ENCODE measurements at regions of chr1 and their contacts with region 1.

Region 1: DNA sequence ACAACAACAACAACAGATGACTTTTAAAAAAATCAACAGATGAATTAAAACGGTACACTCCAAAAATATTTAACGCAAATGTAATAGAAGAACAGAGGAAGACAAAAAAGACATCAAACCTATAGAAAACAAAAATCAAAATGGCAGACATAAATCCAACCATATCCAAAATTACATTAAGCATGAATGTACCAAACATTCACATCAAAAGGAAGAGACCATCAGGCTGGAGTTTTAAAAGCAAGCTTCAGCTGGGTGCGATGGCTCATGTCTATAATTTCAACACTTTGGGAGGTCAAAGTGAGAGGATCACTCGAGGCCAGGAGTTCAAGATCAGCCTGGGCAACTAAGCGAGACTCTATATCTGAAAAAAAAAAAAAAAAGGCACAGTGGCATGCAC is 116.2 kb downstream of the SMYD3 start:
- DNase-seq: no peak
- H3K4me3 ChIP-seq: no peak overlapping the region
- H3K27ac ChIP-seq: no peak overlapping the region
- H3K4me1 ChIP-seq: no peaks in the 10 kb centered on the region
- H3K27me3 ChIP-seq: no peaks in the 10 kb centered on the region
- CTCF ChIP-seq: no peak
- POLR2A ChIP-seq: no peak

Region 2: GRCh38 chr1:246254854-246255253 is 136.0 kb before region 1 on chr1:
- intact Hi-C with region 1: no loop called
- DNase-seq: no peak
- H3K4me3 ChIP-seq: no peak overlapping the region
- H3K27ac ChIP-seq: no peak overlapping the region
- H3K4me1 ChIP-seq: no peaks in the 10 kb centered on the region
- H3K27me3 ChIP-seq: no peaks in the 10 kb centered on the region
- CTCF ChIP-seq: no peak
- POLR2A ChIP-seq: no peak

Region 3: DNA sequence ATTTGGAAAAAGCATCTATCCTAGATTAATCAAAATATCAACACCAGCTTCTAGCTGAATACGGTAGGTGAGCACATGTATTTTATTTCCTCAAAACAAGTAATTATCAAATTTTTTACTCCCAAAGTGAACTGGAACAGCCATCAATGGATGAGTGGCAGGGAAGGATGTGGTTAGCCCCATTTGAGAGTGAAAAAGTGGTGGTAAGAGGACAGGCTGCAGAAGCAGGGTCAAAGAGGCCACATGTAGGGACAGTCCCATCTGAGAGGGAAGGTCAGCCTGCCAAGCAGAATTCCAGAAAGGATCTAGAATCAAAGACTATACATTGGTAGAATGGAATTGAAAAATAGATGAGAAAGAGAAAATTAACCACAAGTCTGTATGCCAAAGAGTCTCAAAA is 47.6 kb before region 1 on chr1:
- intact Hi-C with region 1: loop called (anchors 1 kb)
- DNase-seq: no peak
- H3K4me3 ChIP-seq: no peak overlapping the region
- H3K27ac ChIP-seq: no peak overlapping the region
- H3K4me1 ChIP-seq: no peaks in the 10 kb centered on the region
- H3K27me3 ChIP-seq: no peaks in the 10 kb centered on the region
- CTCF ChIP-seq: no peak
- POLR2A ChIP-seq: no peak

Region 4: GRCh38 chr1:246447501-246447900 is 56.6 kb after region 1 on chr1:
- intact Hi-C with region 1: no loop called
- DNase-seq: no peak
- H3K4me3 ChIP-seq: no peak overlapping the region
- H3K27ac ChIP-seq: no peak overlapping the region
- H3K4me1 ChIP-seq: peaks cover 4% of the 10 kb centered on the region
- H3K27me3 ChIP-seq: no peaks in the 10 kb centered on the region
- CTCF ChIP-seq: no peak
- POLR2A ChIP-seq: no peak